Activated CD4-positive, alpha-beta memory T cell treated with anti-CD3 and anti-CD28 coated beads, Interleukin-2, amount 10 ng/mL, durations not matched to agents 7 days and 5 days (primary cell): ENCODE measurements at regions of chr13 and their contacts with region 1.

Region 1: GRCh38 chr13:48505597-48506091 is 27.2 kb downstream of the RCBTB2 start:
- DNase-seq: peak; percentile 74
- H3K4me3 Mint-ChIP-seq: peak overlapping the region; percentile 50
- H3K27ac Mint-ChIP-seq: peak overlapping the region; percentile 98
- H3K4me1 Mint-ChIP-seq: peaks cover 82% of the 10 kb centered on the region
- H3K27me3 Mint-ChIP-seq: no peaks in the 10 kb centered on the region

Region 2: DNA sequence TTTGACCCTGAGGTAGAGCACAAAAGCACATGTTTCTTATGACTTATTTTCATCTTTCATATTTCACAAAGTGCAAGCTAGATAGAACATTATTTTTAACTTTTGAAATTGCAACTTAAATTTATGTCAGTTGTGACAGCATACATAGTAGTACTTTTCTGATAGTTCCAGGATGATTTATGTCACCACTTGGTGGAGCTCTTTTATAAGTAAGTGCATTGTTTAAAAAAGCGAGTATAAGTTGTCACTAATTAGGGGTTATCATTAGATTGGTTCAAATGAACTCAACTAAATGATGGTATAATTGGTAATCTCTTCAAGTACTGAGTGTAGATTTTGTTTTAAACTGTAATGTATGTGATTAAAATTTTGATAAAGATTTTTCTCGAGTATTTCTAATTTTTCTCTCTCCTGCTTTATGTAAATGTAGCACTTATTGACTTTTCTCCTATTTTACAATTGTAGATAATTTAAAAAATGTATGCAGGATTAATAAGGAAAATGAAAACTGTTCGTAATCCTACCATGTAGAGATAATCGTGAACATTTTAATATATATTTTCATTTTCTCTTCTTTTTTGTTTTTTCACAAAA is 171.0 kb before region 1 on chr13:
- CTCF ChIA-PET with region 1: interaction called, 13 read pairs
- POLR2A ChIA-PET with region 1: no interaction called
- DNase-seq: no peak
- H3K4me3 Mint-ChIP-seq: no peak overlapping the region
- H3K27ac Mint-ChIP-seq: no peak overlapping the region
- H3K4me1 Mint-ChIP-seq: peaks cover 18% of the 10 kb centered on the region
- H3K27me3 Mint-ChIP-seq: no peaks in the 10 kb centered on the region

Region 3: GRCh38 chr13:48400850-48401291 is 104.8 kb before region 1 on chr13:
- CTCF ChIA-PET with region 1: interaction called, 13 read pairs
- POLR2A ChIA-PET with region 1: interaction called, 21 read pairs
- DNase-seq: no peak
- H3K4me3 Mint-ChIP-seq: peak overlapping the region; percentile 38
- H3K27ac Mint-ChIP-seq: peak overlapping the region; percentile 74
- H3K4me1 Mint-ChIP-seq: peaks cover 61% of the 10 kb centered on the region
- H3K27me3 Mint-ChIP-seq: no peaks in the 10 kb centered on the region

Region 4: DNA sequence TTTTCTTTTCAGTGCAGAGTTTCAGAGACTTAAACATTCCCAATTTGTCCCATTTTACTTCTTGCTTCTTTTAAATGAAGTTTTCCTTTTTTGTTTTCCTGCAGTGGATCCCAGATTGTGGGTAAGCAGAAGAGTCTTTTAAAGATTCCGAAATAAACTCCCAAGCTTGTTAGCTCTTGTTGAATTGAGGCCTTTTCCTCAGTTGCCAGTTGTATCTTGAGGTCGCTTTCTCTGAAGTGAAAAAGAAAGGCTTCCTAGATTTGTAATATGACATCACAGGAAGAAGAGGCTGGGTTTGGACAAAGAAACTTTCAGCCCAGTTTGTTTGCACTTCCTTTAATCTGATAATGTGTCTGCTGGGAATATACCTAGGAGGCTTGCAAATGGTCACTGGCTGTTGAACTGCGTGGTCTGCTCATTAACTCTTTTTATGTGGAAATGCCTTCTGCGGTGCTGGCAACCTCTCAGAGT is 92.7 kb before region 1 on chr13 and contains the start of gene LPAR6:
- CTCF ChIA-PET with region 1: interaction called, 5 read pairs
- POLR2A ChIA-PET with region 1: interaction called, 20 read pairs
- DNase-seq: peak; percentile 26
- H3K4me3 Mint-ChIP-seq: peak within 1 kb of the TSS; percentile 99
- H3K27ac Mint-ChIP-seq: peak within 1 kb of the TSS; percentile 96
- H3K4me1 Mint-ChIP-seq: peaks cover 42% of the 10 kb centered on the region
- H3K27me3 Mint-ChIP-seq: no peaks in the 10 kb centered on the region
- total RNA-seq, gene LPAR6: 96.8 to 100 TPM

Region 5: GRCh38 chr13:48492470-48493065 is 13.1 kb before region 1 on chr13:
- CTCF ChIA-PET with region 1: interaction called, 9 read pairs
- POLR2A ChIA-PET with region 1: interaction called, 108 read pairs
- DNase-seq: peak; percentile 85
- H3K4me3 Mint-ChIP-seq: no peak overlapping the region
- H3K27ac Mint-ChIP-seq: no peak overlapping the region
- H3K4me1 Mint-ChIP-seq: peaks cover 69% of the 10 kb centered on the region
- H3K27me3 Mint-ChIP-seq: no peaks in the 10 kb centered on the region

Region 6: DNA sequence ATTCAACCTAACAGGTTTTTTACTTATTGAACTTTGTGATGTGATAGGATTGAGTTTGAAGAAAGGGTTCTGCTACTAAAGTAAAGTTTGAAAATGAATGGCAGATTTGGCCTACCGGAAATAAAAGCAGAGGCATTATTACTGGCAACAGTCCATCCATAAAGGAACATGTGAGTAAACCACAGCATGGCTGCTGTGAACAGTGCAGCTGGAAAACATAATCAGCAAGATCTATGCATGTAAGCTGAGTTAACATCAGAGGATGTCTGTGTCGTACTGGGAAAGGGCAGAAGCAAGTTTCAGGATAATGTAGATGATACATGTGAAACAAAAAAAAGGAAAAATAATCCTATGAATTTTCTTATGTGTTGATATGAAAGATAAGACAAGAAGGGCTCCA is 235.7 kb after region 1 on chr13:
- CTCF ChIA-PET with region 1: no interaction called
- POLR2A ChIA-PET with region 1: no interaction called
- DNase-seq: no peak
- H3K4me3 Mint-ChIP-seq: no peak overlapping the region
- H3K27ac Mint-ChIP-seq: no peak overlapping the region
- H3K4me1 Mint-ChIP-seq: peaks cover 3% of the 10 kb centered on the region
- H3K27me3 Mint-ChIP-seq: peaks cover 1% of the 10 kb centered on the region